Naive thymus-derived CD8-positive, alpha-beta T cell (primary cell): ENCODE measurements at regions of chr3 and their contacts with region 1.

Region 1: DNA sequence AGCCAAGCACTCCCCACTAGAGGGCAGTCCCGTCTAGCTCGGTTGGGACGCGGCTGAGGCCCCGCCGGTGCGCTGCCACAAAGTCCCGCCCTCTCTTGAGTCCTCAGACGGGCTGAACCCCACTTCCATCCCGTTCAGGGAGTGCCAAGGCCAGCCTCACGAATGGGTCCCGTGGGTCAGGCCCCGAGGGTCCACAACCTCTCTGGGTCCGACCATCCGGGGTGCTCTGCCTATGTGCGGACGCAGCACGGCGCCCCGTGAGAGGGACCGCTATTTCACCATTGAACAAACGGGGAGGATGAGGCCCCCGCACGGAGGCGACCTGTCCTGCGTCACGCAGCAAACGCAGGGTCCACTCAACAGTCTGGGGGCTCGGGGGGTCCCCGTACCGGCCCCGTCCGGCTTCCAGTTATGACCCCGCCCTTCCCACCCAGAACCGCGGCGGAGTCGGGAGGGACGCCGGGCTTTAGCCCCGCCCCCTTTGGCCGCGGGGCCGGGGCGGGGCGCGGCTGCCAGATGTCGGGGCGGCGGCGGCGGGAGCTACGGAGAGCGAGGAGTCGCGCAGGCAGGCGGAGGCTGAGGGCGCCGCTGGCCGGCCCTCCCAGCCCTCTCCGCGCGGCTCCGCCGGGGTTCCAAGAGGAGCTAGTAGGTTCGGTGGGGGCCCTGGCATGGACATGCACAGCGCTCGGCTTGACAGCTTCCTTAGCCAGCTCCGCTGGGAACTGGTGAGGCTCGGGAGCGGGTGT is at the start of gene INKA1:
- DNase-seq: peak; percentile 79 to 94 (median 88)
- ATAC-seq: peak; percentile 79 to 82
- H3K4me3 Mint-ChIP-seq: peak within 1 kb of the TSS; percentile 71 to 95 (median 92)
- H3K27ac Mint-ChIP-seq: peak within 1 kb of the TSS; percentile 86 to 98 (median 94)
- H3K4me1 Mint-ChIP-seq: peaks cover 24 to 50% (median 48%) of the 10 kb centered on the region in 4 donors
- H3K27me3 Mint-ChIP-seq: peaks cover 2 to 11% (median 9%) of the 10 kb centered on the region in 5 donors
- polyA plus RNA-seq, gene INKA1: 0.33 to 3.5 (median 0.44) TPM

Region 2: DNA sequence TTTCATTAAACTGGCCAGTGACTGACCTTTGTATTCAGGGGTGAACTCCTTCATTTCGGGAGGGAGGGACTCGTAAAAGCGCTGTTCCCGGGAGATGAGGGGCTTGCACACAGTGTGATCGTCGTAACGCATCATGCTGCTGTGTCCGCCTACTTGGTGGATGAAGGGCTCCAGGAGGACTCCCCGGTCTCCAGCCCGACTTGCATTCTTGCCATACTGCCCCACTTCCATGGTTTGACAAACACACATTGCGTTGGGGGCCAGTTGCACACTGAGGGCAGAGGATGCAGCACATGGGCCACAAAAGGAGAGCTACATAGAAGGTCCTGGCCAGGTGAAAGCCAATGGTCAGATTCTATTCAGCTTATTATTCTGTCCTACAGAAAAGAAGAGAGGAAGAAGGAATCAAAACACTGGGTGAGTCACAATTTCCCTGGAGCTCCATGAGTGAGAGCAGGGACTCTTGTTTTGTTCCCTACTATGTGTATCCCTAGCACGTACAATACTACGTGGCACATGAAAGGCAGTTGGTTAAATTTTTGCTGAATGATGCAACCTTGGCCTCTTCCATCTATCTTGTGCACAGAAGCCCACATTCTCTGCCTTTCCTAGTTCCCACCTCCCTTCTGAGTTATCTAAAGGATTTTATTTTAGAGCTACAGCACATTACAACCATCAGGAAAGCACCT is 55.0 kb before region 1 on chr3:
- POLR2A ChIA-PET with region 1: no interaction called
- DNase-seq: no peak
- ATAC-seq: no peak
- H3K4me3 Mint-ChIP-seq: no peak overlapping the region
- H3K27ac Mint-ChIP-seq: peak overlapping the region in 2 of 10 donors; percentile 53 to 71
- H3K4me1 Mint-ChIP-seq: peaks cover 7 to 20% (median 14%) of the 10 kb centered on the region in 4 donors
- H3K27me3 Mint-ChIP-seq: no peaks in the 10 kb centered on the region

Region 3: GRCh38 chr3:49786241-49786958 is 16.5 kb before region 1 on chr3 and contains the start of gene IP6K1:
- POLR2A ChIA-PET with region 1: interaction called, 35 read pairs
- DNase-seq: peak; percentile 96 to 100 (median 99)
- ATAC-seq: peak; percentile 98
- H3K4me3 Mint-ChIP-seq: peak within 1 kb of the TSS; percentile 90 to 96 (median 94)
- H3K27ac Mint-ChIP-seq: peak within 1 kb of the TSS; percentile 97 to 100 (median 99)
- H3K4me1 Mint-ChIP-seq: peaks cover 18 to 53% (median 37%) of the 10 kb centered on the region in 4 donors
- H3K27me3 Mint-ChIP-seq: no peaks in the 10 kb centered on the region
- polyA plus RNA-seq, gene IP6K1: 11.7 to 26.0 (median 17.4) TPM

Region 4: GRCh38 chr3:49813497-49814174 is 10.7 kb after region 1 on chr3 and contains the start of gene UBA7:
- POLR2A ChIA-PET with region 1: interaction called, 124 read pairs
- DNase-seq: peak in 3 of 10 donors; percentile 55
- ATAC-seq: peak; percentile 88 to 94
- H3K4me3 Mint-ChIP-seq: peak within 1 kb of the TSS; percentile 91 to 99 (median 96)
- H3K27ac Mint-ChIP-seq: peak within 1 kb of the TSS; percentile 95 to 100 (median 98)
- H3K4me1 Mint-ChIP-seq: peaks cover 18 to 62% (median 44%) of the 10 kb centered on the region in 4 donors
- H3K27me3 Mint-ChIP-seq: no peaks in the 10 kb centered on the region
- polyA plus RNA-seq, gene UBA7: 30.9 to 43.8 (median 33.5) TPM

Region 5: DNA sequence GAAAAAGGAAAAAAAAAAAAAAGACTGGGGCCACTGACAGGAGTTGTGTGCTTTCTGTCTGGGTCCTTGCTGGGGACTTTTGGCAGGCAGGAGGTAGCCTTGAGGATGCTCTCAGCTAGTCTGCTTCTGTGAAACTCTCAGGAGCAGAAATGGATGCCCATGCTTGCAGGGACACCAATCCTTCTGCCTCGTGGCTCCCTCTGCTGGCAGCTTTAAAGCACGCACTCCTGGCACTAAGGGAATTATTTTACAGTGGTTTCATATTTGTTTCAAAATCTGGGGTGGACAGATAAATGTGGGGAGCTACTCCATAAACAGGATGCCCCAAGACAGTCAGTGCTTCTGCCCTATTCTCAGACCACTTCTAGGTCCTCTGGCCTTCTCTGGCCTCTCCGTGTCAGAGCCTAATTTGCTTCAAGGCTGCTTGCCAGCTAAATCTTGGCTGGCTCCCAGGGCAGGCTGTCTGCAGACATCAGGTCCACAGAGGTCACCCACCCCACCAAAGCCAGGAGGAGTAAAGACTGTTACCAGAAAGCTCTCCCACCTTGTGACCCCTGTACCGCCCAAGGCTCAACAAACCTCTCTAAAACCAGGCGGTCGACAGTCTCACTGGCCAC is 36.4 kb after region 1 on chr3:
- POLR2A ChIA-PET with region 1: interaction called, 116 read pairs
- DNase-seq: peak; percentile 68 to 90 (median 80)
- ATAC-seq: peak; percentile 99
- H3K4me3 Mint-ChIP-seq: peak overlapping the region in 1 of 10 donors; percentile 25
- H3K27ac Mint-ChIP-seq: no peak overlapping the region
- H3K4me1 Mint-ChIP-seq: peaks cover 2 to 5% (median 2%) of the 10 kb centered on the region in 4 donors
- H3K27me3 Mint-ChIP-seq: no peaks in the 10 kb centered on the region

Region 6: DNA sequence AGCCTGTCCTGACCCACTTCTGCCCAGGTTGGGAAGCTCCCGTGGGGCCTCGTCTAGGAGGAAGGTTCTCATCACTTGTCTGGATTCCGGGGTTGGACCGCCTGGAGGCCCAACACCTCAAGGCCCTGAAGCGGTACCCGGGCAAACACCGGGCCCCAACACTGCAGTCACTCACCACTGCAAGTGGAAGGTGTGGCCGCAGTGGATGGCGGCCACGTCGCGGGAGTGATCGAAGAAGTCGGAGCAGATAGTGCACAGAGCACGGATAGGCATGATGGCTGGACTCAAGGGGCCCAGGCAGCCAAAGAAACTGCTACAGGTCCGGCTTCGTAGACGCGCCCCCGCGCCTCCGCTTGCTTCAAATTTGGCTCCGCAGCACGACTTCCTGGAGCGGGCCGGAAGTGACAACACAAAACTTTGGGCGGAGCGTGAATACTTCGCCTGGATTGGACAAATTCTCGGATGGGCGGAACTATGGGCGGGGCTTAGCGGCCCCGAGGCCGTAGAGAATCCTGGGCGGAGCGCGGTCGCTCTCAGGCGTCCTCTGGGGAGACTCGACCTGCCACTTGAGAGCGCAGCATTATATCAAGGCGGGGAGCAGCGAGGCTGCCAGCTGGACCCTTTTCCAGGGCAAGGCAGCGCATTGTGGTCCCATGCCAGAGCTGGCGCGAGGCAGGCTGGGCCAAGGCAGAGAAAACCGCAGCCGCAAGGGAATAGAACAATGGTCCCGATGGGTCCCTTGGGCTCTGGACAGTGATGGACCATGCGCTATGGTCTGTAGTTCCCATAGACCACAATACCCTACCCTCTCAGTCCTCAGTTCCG is 53.5 kb after region 1 on chr3 and contains the start of gene TRAIP:
- POLR2A ChIA-PET with region 1: interaction called, 11 read pairs
- DNase-seq: peak; percentile 88 to 96 (median 93)
- ATAC-seq: peak; percentile 99
- H3K4me3 Mint-ChIP-seq: peak within 1 kb of the TSS; percentile 79 to 92 (median 86)
- H3K27ac Mint-ChIP-seq: peak within 1 kb of the TSS; percentile 81 to 96 (median 91)
- H3K4me1 Mint-ChIP-seq: peaks cover 2 to 15% (median 15%) of the 10 kb centered on the region in 4 donors
- H3K27me3 Mint-ChIP-seq: peaks cover 0 to 3% (median 0%) of the 10 kb centered on the region in 5 donors
- polyA plus RNA-seq, gene TRAIP: 1.3 to 2.0 (median 1.7) TPM